ENCODE measurements at regions of chr1 and their contacts with region 1.

Region 1: DNA sequence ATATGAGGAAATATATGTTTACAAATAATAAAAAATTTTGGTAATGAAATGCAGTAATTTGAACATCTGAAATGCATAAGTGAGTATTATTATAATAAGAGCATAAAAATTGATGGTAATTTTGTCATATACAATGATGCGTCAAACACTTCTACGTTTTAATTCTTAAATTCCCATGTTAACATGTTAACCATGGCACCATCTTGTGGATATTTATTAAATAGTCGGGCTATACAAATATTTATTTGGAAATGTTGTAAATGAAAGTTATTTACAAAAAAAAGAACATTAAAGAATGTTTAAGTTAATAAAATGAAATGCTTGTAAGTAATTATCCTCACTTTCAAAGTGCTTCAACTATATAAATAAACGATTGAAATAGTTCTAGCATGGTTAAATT is 57.2 kb upstream of the C1orf185 start:
- DNase-seq: no peak
- H3K4me3 ChIP-seq: no peak overlapping the region
- H3K27ac ChIP-seq: no peak overlapping the region
- H3K4me1 ChIP-seq: no peaks in the 10 kb centered on the region
- H3K27me3 ChIP-seq: no peaks in the 10 kb centered on the region
- CTCF ChIP-seq: peak in 3 of 11 experiments; percentile 9 to 25 (median 10)
- POLR2A ChIP-seq: no peak

Region 2: GRCh38 chr1:50873458-50874187 is 171.2 kb before region 1 on chr1:
- intact Hi-C with region 1: loop called (anchors 5 kb)
- DNase-seq: peak; percentile 82
- H3K4me3 ChIP-seq: peak overlapping the region in 2 of 8 donors; percentile 16 to 46
- H3K27ac ChIP-seq: no peak overlapping the region
- H3K4me1 ChIP-seq: peaks cover 0 to 20% (median 6%) of the 10 kb centered on the region in 6 donors
- H3K27me3 ChIP-seq: no peaks in the 10 kb centered on the region
- CTCF ChIP-seq: peak in 10 of 11 experiments; percentile 23 to 71 (median 62)
- POLR2A ChIP-seq: no peak

Region 3: DNA sequence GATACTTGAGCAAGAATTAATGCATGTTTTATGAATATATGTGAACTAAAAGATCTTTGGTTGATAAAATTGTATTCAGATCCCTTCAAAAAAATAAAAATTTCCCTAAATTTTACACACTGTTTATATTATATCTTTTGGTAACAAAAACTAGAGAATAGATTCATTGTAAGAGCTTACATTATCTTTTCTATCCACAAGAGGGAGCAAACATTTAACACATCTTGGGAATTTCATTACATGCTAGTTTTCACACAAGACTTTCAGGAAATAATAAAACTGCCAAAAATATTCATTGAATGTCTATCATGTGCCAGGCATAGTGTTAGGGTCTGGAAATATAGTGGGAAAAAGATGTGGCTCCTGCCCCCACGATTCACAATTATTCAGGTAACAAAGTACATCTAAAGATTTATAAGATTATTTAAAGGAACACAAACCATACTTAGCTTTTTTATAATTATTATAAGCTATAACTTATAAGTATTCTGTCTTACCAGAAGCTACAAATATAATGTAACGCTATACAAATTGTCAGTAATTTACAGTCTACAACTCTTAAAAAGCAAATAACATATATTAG is 115.4 kb before region 1 on chr1:
- intact Hi-C with region 1: loop called (anchors 10 kb)
- DNase-seq: no peak
- H3K4me3 ChIP-seq: no peak overlapping the region
- H3K27ac ChIP-seq: no peak overlapping the region
- H3K4me1 ChIP-seq: peaks cover 0 to 13% (median 0%) of the 10 kb centered on the region in 6 donors
- H3K27me3 ChIP-seq: no peaks in the 10 kb centered on the region
- CTCF ChIP-seq: peak in 10 of 11 experiments; percentile 29 to 62 (median 53)
- POLR2A ChIP-seq: no peak